ENCODE measurements at regions of chr6 and their contacts with region 1.

Region 1: DNA sequence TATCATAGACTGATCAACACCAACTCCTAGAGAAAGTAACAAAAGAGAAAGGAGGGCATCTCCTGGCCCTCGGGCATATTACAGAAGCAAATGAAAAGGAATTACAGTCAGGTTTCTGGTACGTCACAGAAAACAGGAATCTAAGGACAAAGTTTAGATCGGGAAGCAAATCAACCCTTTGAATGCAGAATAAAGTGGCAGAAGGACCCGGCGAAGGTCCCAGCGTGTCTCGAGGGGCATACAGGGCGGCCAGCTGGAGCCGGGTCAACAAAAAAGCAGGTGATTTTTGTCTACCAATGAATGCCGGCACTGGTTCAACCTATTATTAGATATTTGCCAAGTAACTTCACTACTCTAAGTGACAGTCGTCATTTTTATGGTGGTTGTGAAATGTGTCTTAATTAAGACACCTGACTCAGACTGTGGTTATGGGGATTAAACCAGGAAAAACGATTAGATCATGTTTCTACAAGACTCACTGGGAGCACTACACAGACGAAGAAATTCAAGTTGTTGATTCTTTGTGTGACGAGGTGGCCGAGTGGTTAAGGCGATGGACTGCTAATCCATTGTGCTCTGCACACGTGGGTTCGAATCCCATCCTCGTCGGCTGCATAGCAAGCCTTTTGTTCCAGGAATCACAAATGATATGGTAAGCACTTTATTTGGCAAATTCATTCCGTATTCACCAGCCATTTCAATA is 12.4 kb upstream of the ZSCAN9 start:
- DNase-seq: peak; percentile 80 to 95 (median 82)
- ATAC-seq: peak; percentile 78
- H3K4me3 ChIP-seq: peak overlapping the region; percentile 48
- H3K27ac ChIP-seq: peak overlapping the region; percentile 74
- H3K4me1 ChIP-seq: peaks cover 16 to 23% of the 10 kb centered on the region in 2 experiments
- H3K27me3 ChIP-seq: no peaks in the 10 kb centered on the region
- CTCF ChIP-seq: peak in 2 of 3 experiments; percentile 46 to 55; a peak in 5 of 6 replicates
- EP300 ChIP-seq: peak; percentile 84
- POLR2A ChIP-seq: no peak
- RAD21 ChIP-seq: peak; percentile 51 to 60; a peak in 3 of 4 replicates

Region 2: DNA sequence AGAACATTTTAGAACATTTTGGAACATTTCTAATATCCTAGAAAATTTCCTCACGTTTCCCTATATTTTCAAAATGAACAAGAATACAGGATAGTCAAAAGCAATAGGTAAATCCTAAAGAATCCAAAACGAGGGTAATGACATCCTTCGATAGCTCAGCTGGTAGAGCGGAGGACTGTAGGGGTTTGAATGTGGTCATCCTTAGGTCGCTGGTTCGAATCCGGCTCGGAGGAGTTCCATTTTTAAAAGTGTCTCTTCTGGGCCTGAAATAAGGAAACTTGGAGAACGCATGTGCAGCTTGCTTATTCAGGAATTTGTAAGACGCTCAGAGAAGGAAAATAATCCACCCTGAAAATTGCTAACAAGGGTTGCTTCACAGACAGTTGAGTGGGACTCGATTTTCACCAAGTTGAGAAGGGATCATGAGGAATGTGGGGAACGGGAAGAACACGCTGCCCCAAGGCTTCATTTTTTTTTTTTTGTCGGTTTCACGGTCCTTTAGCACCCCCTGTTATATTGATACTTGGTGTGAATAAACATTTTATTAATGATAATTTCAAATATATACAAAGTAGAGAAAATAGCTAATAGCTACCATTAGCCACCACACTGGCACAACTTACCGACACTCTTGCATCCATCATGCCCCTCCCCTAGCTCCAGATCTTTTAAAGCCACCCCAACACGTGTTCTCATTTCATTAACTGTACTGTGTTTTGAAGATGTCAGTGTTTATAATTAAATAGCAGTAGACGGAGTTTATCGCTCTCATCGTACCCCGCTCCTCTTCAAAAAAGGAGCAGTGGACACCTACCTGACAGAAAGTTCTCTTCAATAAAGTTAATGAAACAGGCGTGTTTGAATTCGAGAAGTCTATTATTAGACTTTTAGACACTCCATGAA is 1617.7 kb before region 1 on chr6:
- CTCF ChIA-PET with region 1: no interaction called
- POLR2A ChIA-PET with region 1: no interaction called
- in situ Hi-C with region 1: no loop called
- intact Hi-C with region 1: no loop called
- DNase-seq: peak; percentile 56 to 95 (median 66)
- ATAC-seq: peak; percentile 67
- H3K4me3 ChIP-seq: peak overlapping the region; percentile 91
- H3K27ac ChIP-seq: peak overlapping the region; percentile 88
- H3K4me1 ChIP-seq: peaks cover 16 to 19% of the 10 kb centered on the region in 2 experiments; a peak in 4 of 5 replicates
- H3K27me3 ChIP-seq: no peaks in the 10 kb centered on the region
- CTCF ChIP-seq: no peak
- EP300 ChIP-seq: 0 out of 2 replicates have a peak, but pooled peaks have one; percentile 57
- POLR2A ChIP-seq: no peak
- RAD21 ChIP-seq: peak in 1 of 2 experiments; percentile 14; a peak in 2 of 4 replicates

Region 3: DNA sequence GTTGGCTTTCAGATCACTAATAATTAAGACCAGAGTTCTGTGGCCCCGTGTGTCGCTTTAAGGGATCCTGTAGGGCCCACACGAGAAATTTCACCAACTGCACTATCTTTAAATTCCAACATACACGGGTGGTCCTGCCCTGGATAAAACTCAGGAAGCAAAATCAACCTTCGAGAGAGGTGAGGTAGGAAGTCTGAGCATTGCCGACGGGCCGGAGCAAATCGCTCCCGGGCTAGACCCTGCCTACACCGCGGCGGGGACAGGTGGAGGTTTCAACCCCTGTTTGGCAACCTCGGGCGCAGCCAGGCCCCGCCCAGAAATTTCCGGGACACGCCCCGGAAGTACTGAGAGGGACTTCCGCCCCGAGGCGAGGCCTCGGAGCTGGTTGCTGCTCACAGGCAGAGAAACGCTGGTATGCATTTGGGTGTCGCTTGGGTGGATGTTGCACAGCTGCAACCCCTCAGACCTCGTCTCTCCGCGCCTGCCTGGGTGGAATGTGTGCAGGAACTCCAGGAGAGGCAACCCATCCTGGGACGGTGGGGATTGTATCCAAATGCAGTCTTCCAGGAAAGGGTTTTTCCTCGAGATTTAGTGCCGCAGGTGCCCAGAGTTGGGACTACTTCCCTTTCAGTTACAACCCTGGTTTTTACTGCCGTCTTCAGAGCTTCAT is 51.1 kb before region 1 on chr6:
- CTCF ChIA-PET with region 1: no interaction called
- POLR2A ChIA-PET with region 1: interaction called, 3 read pairs
- in situ Hi-C with region 1: no loop called
- intact Hi-C with region 1: loop called (anchors 5 kb)
- DNase-seq: peak; percentile 89 to 95 (median 92)
- ATAC-seq: peak; percentile 98
- H3K4me3 ChIP-seq: peak overlapping the region; percentile 43
- H3K27ac ChIP-seq: peak overlapping the region; percentile 34
- H3K4me1 ChIP-seq: peaks cover 5 to 8% of the 10 kb centered on the region in 2 experiments
- H3K27me3 ChIP-seq: no peaks in the 10 kb centered on the region
- CTCF ChIP-seq: no peak
- EP300 ChIP-seq: no peak
- POLR2A ChIP-seq: peak; percentile 92
- RAD21 ChIP-seq: no peak

Region 4: GRCh38 chr6:28468056-28468455 is 255.4 kb after region 1 on chr6:
- CTCF ChIA-PET with region 1: no interaction called
- POLR2A ChIA-PET with region 1: no interaction called
- in situ Hi-C with region 1: no loop called
- intact Hi-C with region 1: no loop called
- DNase-seq: no peak
- ATAC-seq: no peak
- H3K4me3 ChIP-seq: no peak overlapping the region
- H3K27ac ChIP-seq: no peak overlapping the region
- H3K4me1 ChIP-seq: no peaks in the 10 kb centered on the region
- H3K27me3 ChIP-seq: no peaks in the 10 kb centered on the region
- CTCF ChIP-seq: no peak
- EP300 ChIP-seq: no peak
- POLR2A ChIP-seq: no peak
- RAD21 ChIP-seq: no peak